IMR-90 (cell line): ENCODE measurements at regions of chr2 and their contacts with region 1.

Region 1: GRCh38 chr2:218186355-218186766 is 19.6 kb upstream of the CXCR1 start:
- DNase-seq: peak; percentile 72
- ATAC-seq: peak; percentile 99
- H3K4me3 ChIP-seq: no peak overlapping the region
- H3K27ac ChIP-seq: no peak overlapping the region
- H3K4me1 ChIP-seq: no peaks in the 10 kb centered on the region; the same call in 1 of the 2 replicates
- H3K27me3 ChIP-seq: peaks cover 33% of the 10 kb centered on the region
- CTCF ChIP-seq: peak; percentile 78
- POLR2A ChIP-seq: no peak
- RAD21 ChIP-seq: peak; percentile 68

Region 2: GRCh38 chr2:218229239-218229638 is 42.9 kb after region 1 on chr2:
- CTCF ChIA-PET with region 1: no interaction called
- POLR2A ChIA-PET with region 1: interaction called, 3 read pairs
- dilution Hi-C with region 1: no loop called
- in situ Hi-C with region 1: no loop called
- intact Hi-C with region 1: loop called (anchors 5 kb)
- DNase-seq: peak; percentile 87
- ATAC-seq: peak; percentile 90
- H3K4me3 ChIP-seq: no peak overlapping the region
- H3K27ac ChIP-seq: no peak overlapping the region; the same call in 1 of the 2 replicates
- H3K4me1 ChIP-seq: peaks cover 11% of the 10 kb centered on the region; the same call in 1 of the 2 replicates
- H3K27me3 ChIP-seq: no peaks in the 10 kb centered on the region
- CTCF ChIP-seq: no peak
- POLR2A ChIP-seq: no peak
- RAD21 ChIP-seq: no peak

Region 3: GRCh38 chr2:218245214-218245613 is 58.9 kb after region 1 on chr2:
- CTCF ChIA-PET with region 1: no interaction called
- POLR2A ChIA-PET with region 1: no interaction called
- dilution Hi-C with region 1: no loop called
- in situ Hi-C with region 1: no loop called
- intact Hi-C with region 1: loop called (anchors 2 kb)
- DNase-seq: no peak
- ATAC-seq: no peak
- H3K4me3 ChIP-seq: no peak overlapping the region
- H3K27ac ChIP-seq: no peak overlapping the region
- H3K4me1 ChIP-seq: no peaks in the 10 kb centered on the region
- H3K27me3 ChIP-seq: no peaks in the 10 kb centered on the region
- CTCF ChIP-seq: no peak
- POLR2A ChIP-seq: no peak
- RAD21 ChIP-seq: no peak

Region 4: GRCh38 chr2:218257390-218257981 is 71.1 kb after region 1 on chr2:
- CTCF ChIA-PET with region 1: no interaction called
- POLR2A ChIA-PET with region 1: no interaction called
- dilution Hi-C with region 1: no loop called
- in situ Hi-C with region 1: no loop called
- intact Hi-C with region 1: loop called (anchors 5 kb)
- DNase-seq: no peak
- ATAC-seq: no peak
- H3K4me3 ChIP-seq: no peak overlapping the region
- H3K27ac ChIP-seq: no peak overlapping the region
- H3K4me1 ChIP-seq: peaks cover 14% of the 10 kb centered on the region
- H3K27me3 ChIP-seq: no peaks in the 10 kb centered on the region
- CTCF ChIP-seq: peak; percentile 51
- POLR2A ChIP-seq: no peak
- RAD21 ChIP-seq: no peak

Region 5: DNA sequence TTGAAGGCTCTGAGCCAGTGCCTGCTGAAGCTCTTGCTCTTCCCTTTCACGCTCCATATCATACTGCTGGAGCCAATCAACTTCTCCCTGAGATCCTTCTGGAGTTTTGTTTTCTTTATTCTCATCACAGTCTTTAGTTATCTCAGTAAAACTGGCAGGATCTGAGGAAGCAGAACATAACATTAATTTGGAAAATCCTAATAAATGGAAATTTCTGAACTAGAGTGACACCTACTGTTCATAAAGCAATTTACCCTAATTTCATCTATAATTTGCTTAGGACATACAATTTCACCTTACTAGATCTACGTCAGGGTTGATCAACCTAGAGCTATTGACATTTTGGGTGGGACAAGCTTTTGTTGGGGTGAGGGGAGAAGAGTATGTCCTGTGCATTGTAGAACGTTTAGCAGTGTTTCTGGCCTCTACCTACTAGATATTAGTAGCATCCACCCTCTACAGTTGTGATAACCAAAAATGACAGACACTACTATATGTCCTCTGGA is 279.7 kb after region 1 on chr2:
- CTCF ChIA-PET with region 1: no interaction called
- POLR2A ChIA-PET with region 1: no interaction called
- dilution Hi-C with region 1: no loop called
- in situ Hi-C with region 1: no loop called
- intact Hi-C with region 1: loop called (anchors 2 kb)
- DNase-seq: peak; percentile 36
- ATAC-seq: peak; percentile 77
- H3K4me3 ChIP-seq: no peak overlapping the region
- H3K27ac ChIP-seq: no peak overlapping the region
- H3K4me1 ChIP-seq: no peaks in the 10 kb centered on the region
- H3K27me3 ChIP-seq: no peaks in the 10 kb centered on the region
- CTCF ChIP-seq: peak; percentile 56
- POLR2A ChIP-seq: no peak
- RAD21 ChIP-seq: peak; percentile 46